Right ventricle myocardium inferior (tissue), 1 donor: ENCODE measurements at regions of chr7 and their contacts with region 1.

Region 1: GRCh38 chr7:923108-924041 is 31.1 kb downstream of the ADAP1 start:
- DNase-seq: peak; percentile 89
- ATAC-seq: peak; percentile 40

Region 2: GRCh38 chr7:977326-978048 is 54.1 kb after region 1 on chr7:
- intact Hi-C with region 1: loop called (anchors 2 kb)
- DNase-seq: no peak
- ATAC-seq: no peak